ENCODE measurements at regions of chr14 and their contacts with region 1.

Region 1: GRCh38 chr14:50321009-50321660 is 9.0 kb downstream of the DMAC2L start:
- DNase-seq: no peak
- H3K4me3 ChIP-seq: no peak overlapping the region
- H3K27ac ChIP-seq: no peak overlapping the region
- H3K4me1 ChIP-seq: no peaks in the 10 kb centered on the region
- H3K27me3 ChIP-seq: no peaks in the 10 kb centered on the region
- CTCF ChIP-seq: peak; percentile 46 to 92 (median 75)
- EP300 ChIP-seq: no peak
- POLR2A ChIP-seq: no peak
- RAD21 ChIP-seq: peak; percentile 69 to 75

Region 2: GRCh38 chr14:50333006-50333509 is 11.9 kb after region 1 on chr14:
- CTCF ChIA-PET with region 1: interaction called, 30 read pairs
- POLR2A ChIA-PET with region 1: interaction called, 7 read pairs
- DNase-seq: no peak
- H3K4me3 ChIP-seq: no peak overlapping the region
- H3K27ac ChIP-seq: no peak overlapping the region
- H3K4me1 ChIP-seq: peaks cover 8 to 13% (median 11%) of the 10 kb centered on the region in 4 experiments; a peak in 6 of 7 replicates
- H3K27me3 ChIP-seq: no peaks in the 10 kb centered on the region
- CTCF ChIP-seq: no peak
- EP300 ChIP-seq: no peak
- POLR2A ChIP-seq: no peak
- RAD21 ChIP-seq: no peak

Region 3: GRCh38 chr14:50344116-50344775 is 23.1 kb after region 1 on chr14:
- CTCF ChIA-PET with region 1: interaction called, 13 read pairs
- POLR2A ChIA-PET with region 1: interaction called, 3 read pairs
- DNase-seq: no peak
- H3K4me3 ChIP-seq: no peak overlapping the region
- H3K27ac ChIP-seq: no peak overlapping the region
- H3K4me1 ChIP-seq: peaks cover 0 to 3% (median 2%) of the 10 kb centered on the region in 4 experiments; a peak in 4 of 7 replicates
- H3K27me3 ChIP-seq: no peaks in the 10 kb centered on the region
- CTCF ChIP-seq: no peak
- EP300 ChIP-seq: no peak
- POLR2A ChIP-seq: no peak
- RAD21 ChIP-seq: no peak